Posterior cingulate gyrus (tissue), 11 donors: ENCODE measurements at regions of chr11 and their contacts with region 1.

Region 1: GRCh38 chr11:117098269-117099232 is at the start of gene SIK3:
- DNase-seq: peak; percentile 92 to 100 (median 96)

Region 2: GRCh38 chr11:116879800-116880625 is 218.5 kb before region 1 on chr11:
- intact Hi-C with region 1: loop called (anchors 2 kb)
- DNase-seq: peak in 1 of 10 donors; percentile 26

Region 3: DNA sequence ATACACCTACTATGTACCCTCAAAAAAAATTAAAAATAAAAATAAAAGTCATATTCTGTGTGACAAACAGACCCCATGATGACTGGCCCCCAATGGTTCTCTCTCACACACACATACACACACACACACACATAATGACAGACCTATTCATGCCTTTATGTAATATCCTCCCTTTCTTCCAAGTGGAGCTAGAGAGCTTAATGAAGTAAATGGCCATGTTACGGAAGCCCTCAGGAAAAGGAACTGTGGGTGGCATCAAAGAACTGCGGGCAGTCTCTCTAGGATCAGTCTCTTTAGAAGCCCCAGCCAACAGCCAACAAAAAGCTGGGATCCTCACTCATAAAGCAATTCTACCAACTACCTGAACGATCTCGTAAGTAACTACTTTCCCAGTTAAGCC is 125.9 kb before region 1 on chr11:
- intact Hi-C with region 1: loop called (anchors 5 kb)
- DNase-seq: no peak